ENCODE measurements at regions of chr3 and their contacts with region 1.

Region 1: DNA sequence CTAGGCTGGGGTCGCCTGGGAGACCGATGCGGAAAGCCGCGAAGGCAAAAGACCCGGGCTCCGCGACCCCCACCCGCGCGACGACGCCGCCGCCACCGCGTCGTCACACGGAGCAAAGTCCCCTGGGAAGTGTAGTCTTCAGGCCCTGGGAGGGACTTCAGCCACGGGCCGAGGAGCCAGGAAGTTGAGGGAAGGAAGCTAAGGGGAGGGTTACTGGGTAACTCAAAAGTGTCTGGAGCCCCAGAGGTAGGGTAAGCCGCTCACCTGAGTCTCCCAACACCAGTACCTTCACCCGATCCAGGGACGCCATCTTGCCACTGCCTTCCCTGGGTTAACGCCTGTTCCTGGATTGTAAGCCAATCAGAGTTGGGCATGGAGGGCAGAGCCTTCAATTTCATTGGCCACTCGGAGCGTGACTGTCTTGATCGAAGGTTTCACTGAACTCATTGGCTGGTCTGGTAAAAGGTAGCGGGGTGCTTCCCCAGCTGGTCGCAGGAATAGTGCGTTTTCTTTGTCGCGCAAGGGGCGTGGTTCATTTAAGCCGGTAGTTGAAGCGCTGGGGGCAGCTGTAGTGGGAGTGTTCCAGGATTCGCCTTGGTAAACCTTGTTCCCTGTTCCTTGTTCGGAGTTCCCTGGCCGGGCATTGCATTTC is at the starts of genes GTF2E1 and RABL3:
- DNase-seq: peak; percentile 90 to 99 (median 94)
- ATAC-seq: peak; percentile 94
- H3K4me3 ChIP-seq: peak within 1 kb of the TSS; percentile 61
- H3K4me3 Mint-ChIP-seq: peak within 1 kb of the TSS; percentile 95
- H3K27ac ChIP-seq: peak within 1 kb of the TSS; percentile 99
- H3K27ac Mint-ChIP-seq: peak within 1 kb of the TSS; percentile 96
- H3K4me1 ChIP-seq: peaks cover 25% of the 10 kb centered on the region
- H3K4me1 Mint-ChIP-seq: peaks cover 50% of the 10 kb centered on the region
- H3K27me3 ChIP-seq: no peaks in the 10 kb centered on the region
- H3K27me3 Mint-ChIP-seq: no peaks in the 10 kb centered on the region
- CTCF ChIP-seq: no peak
- total RNA-seq, gene GTF2E1: 6.3 to 7.5 TPM
- total RNA-seq, gene RABL3: 12.9 to 13.6 TPM

Region 2: GRCh38 chr3:120567370-120568201 is 174.7 kb before region 1 on chr3:
- CTCF ChIA-PET with region 1: no interaction called
- POLR2A ChIA-PET with region 1: interaction called, 14 read pairs
- intact Hi-C with region 1: no loop called
- DNase-seq: peak in 4 of 14 experiments; percentile 17 to 37 (median 28)
- ATAC-seq: peak; percentile 54
- H3K4me3 ChIP-seq: no peak overlapping the region
- H3K4me3 Mint-ChIP-seq: peak overlapping the region; percentile 39
- H3K27ac ChIP-seq: no peak overlapping the region
- H3K27ac Mint-ChIP-seq: no peak overlapping the region
- H3K4me1 ChIP-seq: no peaks in the 10 kb centered on the region
- H3K4me1 Mint-ChIP-seq: peaks cover 5% of the 10 kb centered on the region
- H3K27me3 ChIP-seq: peaks cover 0 to 4% of the 10 kb centered on the region in 2 experiments
- H3K27me3 Mint-ChIP-seq: peaks cover 24% of the 10 kb centered on the region
- CTCF ChIP-seq: peak; percentile 54

Region 3: GRCh38 chr3:120596116-120596852 is 146.0 kb before region 1 on chr3 and contains the start of gene NDUFB4:
- CTCF ChIA-PET with region 1: interaction called, 3 read pairs
- POLR2A ChIA-PET with region 1: interaction called, 71 read pairs
- intact Hi-C with region 1: loop called (anchors 1 to 2 kb)
- DNase-seq: peak; percentile 87 to 99 (median 94)
- ATAC-seq: peak; percentile 87
- H3K4me3 ChIP-seq: peak within 1 kb of the TSS; percentile 88
- H3K4me3 Mint-ChIP-seq: peak within 1 kb of the TSS; percentile 98
- H3K27ac ChIP-seq: peak within 1 kb of the TSS; percentile 94 to 95
- H3K27ac Mint-ChIP-seq: no peak within 1 kb of the TSS
- H3K4me1 ChIP-seq: peaks cover 14% of the 10 kb centered on the region
- H3K4me1 Mint-ChIP-seq: peaks cover 8% of the 10 kb centered on the region
- H3K27me3 ChIP-seq: no peaks in the 10 kb centered on the region
- H3K27me3 Mint-ChIP-seq: no peaks in the 10 kb centered on the region
- CTCF ChIP-seq: no peak
- total RNA-seq, gene NDUFB4: 81.3 to 84.0 TPM

Region 4: DNA sequence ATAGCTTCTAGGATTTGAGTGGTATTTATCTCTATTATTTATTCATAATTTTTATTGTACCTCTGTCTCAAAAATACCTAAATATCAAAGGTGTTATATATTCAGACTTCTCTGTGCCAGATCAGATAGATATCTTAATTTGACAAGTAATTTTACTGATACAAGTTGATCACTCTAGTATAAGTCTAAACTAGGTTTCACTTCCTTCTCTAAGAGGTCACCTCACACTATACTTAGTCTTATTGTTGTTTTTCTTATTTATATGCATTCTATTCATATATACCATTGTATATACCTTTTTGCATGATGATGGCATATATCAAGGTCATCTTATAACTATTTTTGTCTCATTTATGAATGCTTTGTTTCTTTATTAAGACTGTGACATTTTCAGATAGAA is 33.9 kb before region 1 on chr3:
- CTCF ChIA-PET with region 1: no interaction called
- POLR2A ChIA-PET with region 1: interaction called, 5 read pairs
- intact Hi-C with region 1: loop called (anchors 5 kb)
- DNase-seq: no peak
- ATAC-seq: no peak
- H3K4me3 ChIP-seq: no peak overlapping the region
- H3K4me3 Mint-ChIP-seq: no peak overlapping the region
- H3K27ac ChIP-seq: no peak overlapping the region
- H3K27ac Mint-ChIP-seq: peak overlapping the region; percentile 40
- H3K4me1 ChIP-seq: no peaks in the 10 kb centered on the region
- H3K4me1 Mint-ChIP-seq: peaks cover 5% of the 10 kb centered on the region
- H3K27me3 ChIP-seq: no peaks in the 10 kb centered on the region
- H3K27me3 Mint-ChIP-seq: no peaks in the 10 kb centered on the region
- CTCF ChIP-seq: no peak

Region 5: DNA sequence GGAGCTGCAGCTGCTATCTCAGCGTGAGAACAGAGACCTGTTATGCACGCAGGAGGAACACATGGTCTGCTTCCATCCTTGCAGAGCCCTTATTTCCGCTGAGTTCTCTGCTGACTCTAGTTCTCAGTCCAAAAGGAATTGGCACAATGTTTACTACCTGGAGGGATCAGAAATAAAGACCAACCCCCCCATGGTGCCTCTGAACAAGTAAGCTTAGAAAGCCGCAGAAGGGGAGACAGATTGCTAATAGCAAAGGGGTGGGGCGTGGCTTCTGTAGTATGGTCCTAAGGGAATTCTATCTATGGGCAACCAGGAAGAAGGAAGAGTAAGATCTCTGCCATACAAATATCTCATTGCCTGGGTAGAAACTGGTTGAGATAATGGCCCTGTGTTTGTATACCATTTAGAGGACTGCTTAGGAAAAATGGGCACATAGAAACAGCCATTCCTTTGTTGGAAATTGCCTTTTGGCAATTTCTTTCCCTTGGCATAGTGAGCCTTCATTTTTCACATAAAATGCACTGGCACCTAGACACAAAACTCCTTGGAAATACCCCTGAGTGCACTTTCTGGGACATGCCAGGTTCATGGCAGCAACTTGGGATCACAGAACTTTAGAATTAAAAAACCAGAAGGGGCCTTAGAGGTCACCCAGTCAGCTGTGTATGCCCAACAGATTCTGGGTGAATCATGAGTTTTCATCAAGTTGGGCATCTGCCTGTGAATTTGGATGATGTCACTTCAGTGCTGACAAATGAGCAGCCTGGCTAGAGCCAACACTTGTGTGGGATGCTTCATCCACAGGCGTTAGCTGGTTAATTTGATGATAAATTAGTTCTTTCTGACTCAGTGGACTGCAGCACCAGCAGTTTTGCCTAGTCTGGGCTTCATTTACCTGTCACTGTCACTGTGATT is 108.3 kb after region 1 on chr3:
- CTCF ChIA-PET with region 1: no interaction called
- POLR2A ChIA-PET with region 1: no interaction called
- intact Hi-C with region 1: no loop called
- DNase-seq: no peak
- ATAC-seq: no peak
- H3K4me3 ChIP-seq: no peak overlapping the region
- H3K4me3 Mint-ChIP-seq: no peak overlapping the region
- H3K27ac ChIP-seq: no peak overlapping the region
- H3K27ac Mint-ChIP-seq: no peak overlapping the region
- H3K4me1 ChIP-seq: no peaks in the 10 kb centered on the region
- H3K4me1 Mint-ChIP-seq: no peaks in the 10 kb centered on the region
- H3K27me3 ChIP-seq: no peaks in the 10 kb centered on the region
- H3K27me3 Mint-ChIP-seq: peaks cover 21% of the 10 kb centered on the region
- CTCF ChIP-seq: no peak

Measured in CD4-positive, alpha-beta T cell (primary cell).